ENCODE measurements at regions of chr13 and their contacts with region 1.

Region 1: GRCh38 chr13:76886292-76887075 is at the start of gene KCTD12:
- ATAC-seq: peak; percentile 51 to 88 (median 86)
- H3K4me3 ChIP-seq: peak within 1 kb of the TSS; percentile 52 to 99 (median 66)
- H3K27ac ChIP-seq: peak within 1 kb of the TSS in 1 of 2 donors; percentile 22
- H3K4me1 ChIP-seq: no peaks in the 10 kb centered on the region
- total RNA-seq, gene KCTD12: 3.8 to 42.7 (median 12.8) TPM

Region 2: DNA sequence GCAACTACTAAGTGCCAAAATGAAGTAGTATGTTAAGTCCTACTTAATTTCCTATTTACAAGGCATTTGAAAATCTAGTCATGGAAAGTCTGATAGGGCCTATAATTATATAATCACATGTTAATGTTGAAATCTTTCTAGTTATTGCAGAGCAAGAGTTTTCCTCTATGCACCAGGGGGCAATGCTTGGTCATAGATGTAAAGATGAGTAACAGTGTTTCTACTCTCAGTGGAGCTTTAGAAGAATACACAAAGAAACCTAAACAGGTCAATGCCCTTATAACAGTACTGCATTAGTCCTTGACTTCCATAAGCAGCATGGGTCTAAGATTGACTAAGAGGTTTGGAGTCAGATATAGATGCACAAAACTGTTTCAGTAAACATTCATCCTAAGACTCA is 218.9 kb before region 1 on chr13:
- in situ Hi-C with region 1: loop called in 2 of 9 experiments (anchors 25 kb)
- ATAC-seq: peak in 3 of 8 experiments; percentile 62 to 77 (median 64)
- H3K4me3 ChIP-seq: no peak overlapping the region
- H3K27ac ChIP-seq: no peak overlapping the region
- H3K4me1 ChIP-seq: no peaks in the 10 kb centered on the region

Measured in motor neuron (in vitro differentiated cells).